Naive thymus-derived CD4-positive, alpha-beta T cell (primary cell): ENCODE measurements at regions of chr2 and their contacts with region 1.

Region 1: DNA sequence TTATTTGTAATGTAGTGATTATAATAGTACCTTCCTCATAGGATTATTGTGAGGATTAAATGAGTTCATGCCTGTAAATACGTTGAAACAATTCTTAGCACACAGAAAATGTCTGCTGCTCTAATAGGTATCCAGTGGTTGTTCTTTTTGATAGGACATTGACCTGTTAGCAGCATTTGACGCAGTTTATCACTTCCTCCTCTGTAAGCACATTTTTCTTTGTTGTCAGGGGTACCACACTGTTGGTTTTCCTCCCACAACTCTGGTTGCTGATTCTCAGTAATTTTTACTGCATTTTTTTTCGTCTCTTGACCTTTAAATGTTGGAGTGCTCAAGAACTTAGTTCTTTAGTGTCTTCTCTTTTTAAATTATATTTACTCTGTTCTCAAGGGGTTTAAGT is 15.4 kb downstream of the PPM1B start:
- DNase-seq: peak in 7 of 9 donors; percentile 10 to 46 (median 25)
- ATAC-seq: peak; percentile 88
- H3K4me3 ChIP-seq: no peak overlapping the region
- H3K4me3 Mint-ChIP-seq: peak overlapping the region; percentile 26 to 68 (median 55)
- H3K27ac ChIP-seq: no peak overlapping the region
- H3K27ac Mint-ChIP-seq: peak overlapping the region; percentile 4 to 90 (median 73)
- H3K4me1 ChIP-seq: peaks cover 26 to 38% of the 10 kb centered on the region in 2 donors
- H3K4me1 Mint-ChIP-seq: peaks cover 60 to 99% (median 87%) of the 10 kb centered on the region in 7 donors
- H3K27me3 ChIP-seq: no peaks in the 10 kb centered on the region
- H3K27me3 Mint-ChIP-seq: no peaks in the 10 kb centered on the region

Region 2: GRCh38 chr2:44201648-44202165 is 17.6 kb after region 1 on chr2:
- CTCF ChIA-PET with region 1: no interaction called
- POLR2A ChIA-PET with region 1: no interaction called
- intact Hi-C with region 1: loop called in 1 of 2 experiments (anchors 2 kb)
- DNase-seq: no peak
- ATAC-seq: no peak
- H3K4me3 ChIP-seq: no peak overlapping the region
- H3K4me3 Mint-ChIP-seq: peak overlapping the region in 6 of 10 donors; percentile 2 to 61 (median 20)
- H3K27ac ChIP-seq: no peak overlapping the region
- H3K27ac Mint-ChIP-seq: peak overlapping the region in 5 of 9 donors; percentile 6 to 76 (median 29)
- H3K4me1 ChIP-seq: peaks cover 0 to 20% of the 10 kb centered on the region in 2 donors
- H3K4me1 Mint-ChIP-seq: peaks cover 28 to 84% (median 76%) of the 10 kb centered on the region in 7 donors
- H3K27me3 ChIP-seq: no peaks in the 10 kb centered on the region
- H3K27me3 Mint-ChIP-seq: no peaks in the 10 kb centered on the region

Region 3: GRCh38 chr2:44218771-44219170 is 34.7 kb after region 1 on chr2:
- CTCF ChIA-PET with region 1: no interaction called
- POLR2A ChIA-PET with region 1: no interaction called
- intact Hi-C with region 1: loop called in 1 of 2 experiments (anchors 5 kb)
- DNase-seq: no peak
- ATAC-seq: no peak
- H3K4me3 ChIP-seq: no peak overlapping the region
- H3K4me3 Mint-ChIP-seq: no peak overlapping the region
- H3K27ac ChIP-seq: no peak overlapping the region
- H3K27ac Mint-ChIP-seq: peak overlapping the region in 7 of 9 donors; percentile 11 to 79 (median 62)
- H3K4me1 ChIP-seq: no peaks in the 10 kb centered on the region
- H3K4me1 Mint-ChIP-seq: peaks cover 7 to 47% (median 28%) of the 10 kb centered on the region in 7 donors
- H3K27me3 ChIP-seq: no peaks in the 10 kb centered on the region
- H3K27me3 Mint-ChIP-seq: no peaks in the 10 kb centered on the region